Naive thymus-derived CD8-positive, alpha-beta T cell (primary cell): ENCODE measurements at regions of chr20 and their contacts with region 1.

Region 1: DNA sequence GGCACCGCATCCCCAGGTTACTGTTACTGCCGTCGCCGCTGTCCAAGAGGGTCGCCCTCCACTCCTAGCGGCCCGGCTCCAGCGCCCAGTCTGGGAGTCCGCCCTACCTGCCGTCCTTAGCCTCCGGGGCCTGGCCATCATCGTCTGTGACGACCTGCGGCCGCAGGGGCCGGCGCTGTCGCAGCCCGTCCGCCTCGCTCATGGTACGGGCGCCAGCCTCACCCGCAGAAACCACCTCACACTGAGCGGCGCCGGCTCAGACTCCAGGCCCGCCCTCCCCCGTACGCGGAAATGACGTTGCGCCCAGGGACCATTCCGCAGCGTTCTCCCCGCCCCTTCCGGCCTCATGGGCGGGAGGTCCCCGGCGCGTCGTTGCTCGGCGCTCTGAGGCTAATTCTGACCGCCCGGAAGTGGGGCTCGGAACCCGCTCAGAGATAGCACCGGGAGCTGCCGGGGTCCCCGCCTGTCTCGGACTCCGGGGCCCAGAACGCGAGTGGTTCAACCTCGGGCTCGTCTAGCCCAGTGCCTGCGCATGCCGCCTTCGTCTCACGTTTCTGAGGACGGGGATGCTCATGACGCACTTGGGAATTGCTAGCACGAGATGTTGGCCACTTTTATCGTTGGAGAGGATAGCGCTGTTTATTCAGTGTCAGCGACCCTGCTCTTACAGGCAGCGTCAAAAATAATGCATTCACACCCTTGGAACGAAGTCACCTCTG is at the start of gene APMAP:
- DNase-seq: peak; percentile 89 to 97 (median 95)
- ATAC-seq: peak; percentile 92 to 93
- H3K4me3 Mint-ChIP-seq: peak within 1 kb of the TSS; percentile 93 to 97 (median 96)
- H3K27ac Mint-ChIP-seq: peak within 1 kb of the TSS; percentile 93 to 99 (median 98)
- H3K4me1 Mint-ChIP-seq: peaks cover 36 to 72% (median 56%) of the 10 kb centered on the region in 4 donors
- H3K27me3 Mint-ChIP-seq: no peaks in the 10 kb centered on the region
- polyA plus RNA-seq, gene APMAP: 74.5 to 234 (median 81.7) TPM

Region 2: DNA sequence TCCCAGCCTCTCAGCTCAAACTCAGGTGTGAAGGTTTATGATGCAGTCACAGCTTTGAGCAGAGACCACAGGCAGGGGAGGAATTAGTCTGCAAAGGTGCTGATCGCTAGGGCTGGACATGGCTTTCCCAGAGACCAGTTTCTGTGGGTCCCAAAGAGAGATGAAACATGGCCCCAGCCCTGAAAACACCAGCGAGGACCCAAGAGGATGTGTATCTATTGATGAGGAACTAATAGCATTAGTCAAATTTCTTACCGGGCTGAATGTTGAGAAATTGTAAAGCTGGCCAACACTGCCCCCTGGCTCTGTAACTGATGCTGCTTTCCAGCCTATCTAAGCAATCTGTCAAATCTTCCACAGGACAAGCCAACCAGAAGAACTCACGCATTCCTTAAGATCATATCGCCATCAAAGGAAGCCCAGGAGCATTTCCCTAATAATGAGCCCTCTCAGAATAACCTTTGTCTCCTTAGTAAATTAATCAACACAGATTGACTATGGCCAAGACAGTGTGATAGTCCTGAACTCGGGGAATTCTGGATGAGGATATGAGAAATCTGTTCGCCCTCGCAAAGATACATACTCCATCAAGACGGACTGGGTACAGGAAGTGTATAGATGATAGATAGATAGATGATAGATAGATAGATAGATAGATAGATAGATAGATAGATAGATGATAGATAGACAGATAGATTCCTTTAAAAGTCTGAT is 73.1 kb after region 1 on chr20:
- POLR2A ChIA-PET with region 1: interaction called, 24 read pairs
- DNase-seq: peak; percentile 47 to 81 (median 64)
- ATAC-seq: peak; percentile 77 to 91
- H3K4me3 Mint-ChIP-seq: no peak overlapping the region
- H3K27ac Mint-ChIP-seq: peak overlapping the region in 3 of 10 donors; percentile 5 to 39 (median 33)
- H3K4me1 Mint-ChIP-seq: peaks cover 4 to 15% (median 7%) of the 10 kb centered on the region in 4 donors
- H3K27me3 Mint-ChIP-seq: peaks cover 10 to 24% (median 13%) of the 10 kb centered on the region in 5 donors